ENCODE measurements at regions of chr11 and their contacts with region 1.

Region 1: GRCh38 chr11:73072901-73073481 is 69.1 kb downstream of the FCHSD2 start:
- DNase-seq: peak; percentile 72
- ATAC-seq: peak; percentile 89
- H3K4me3 ChIP-seq: peak overlapping the region; percentile 41
- H3K27ac ChIP-seq: peak overlapping the region; percentile 71
- H3K4me1 ChIP-seq: peaks cover 15% of the 10 kb centered on the region; the same call in 1 of the 2 replicates
- H3K27me3 ChIP-seq: no peaks in the 10 kb centered on the region
- CTCF ChIP-seq: no peak
- EP300 ChIP-seq: peak; percentile 65 to 70; a peak in 2 of 4 replicates
- POLR2A ChIP-seq: 0 out of 2 replicates have a peak, but pooled peaks have one; percentile 31
- RAD21 ChIP-seq: no peak

Region 2: DNA sequence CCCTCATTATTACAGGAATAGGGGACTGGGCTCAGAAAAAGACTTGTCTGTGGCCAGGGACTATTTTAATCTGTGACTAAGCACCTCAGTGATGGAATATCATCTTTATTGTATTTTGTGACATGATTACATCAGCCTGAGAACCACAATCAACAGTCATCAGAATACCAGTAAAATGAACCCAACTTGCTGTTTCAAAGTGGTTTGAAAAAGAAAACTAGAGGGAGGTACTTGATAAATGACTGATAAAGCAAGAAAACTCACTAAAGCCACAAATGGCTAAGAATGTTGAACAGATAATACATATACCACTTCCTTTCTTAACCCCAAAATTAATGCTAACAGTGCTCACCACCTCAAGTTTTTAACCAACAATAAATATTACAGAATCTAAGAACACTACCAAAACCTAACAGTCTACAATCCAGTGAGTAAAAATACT is 103.1 kb before region 1 on chr11:
- CTCF ChIA-PET with region 1: no interaction called
- POLR2A ChIA-PET with region 1: interaction called, 4 read pairs
- RAD21 ChIA-PET with region 1: no interaction called
- SMC1A ChIA-PET with region 1: no interaction called
- in situ Hi-C with region 1: no loop called
- intact Hi-C with region 1: loop called (anchors 5 kb)
- DNase-seq: peak; percentile 82
- ATAC-seq: peak; percentile 95
- H3K4me3 ChIP-seq: 0 out of 2 replicates have a peak overlapping the region, but pooled peaks have one; percentile 1
- H3K27ac ChIP-seq: peak overlapping the region; percentile 81
- H3K4me1 ChIP-seq: peaks cover 28% of the 10 kb centered on the region
- H3K27me3 ChIP-seq: no peaks in the 10 kb centered on the region
- CTCF ChIP-seq: no peak
- EP300 ChIP-seq: peak; percentile 82
- POLR2A ChIP-seq: no peak
- RAD21 ChIP-seq: peak; percentile 2; the same call in 1 of the 2 replicates

Measured in GM12878 (cell line).